Dorsolateral prefrontal cortex (tissue), 120 donors: ENCODE measurements at regions of chr1 and their contacts with region 1.

Region 1: DNA sequence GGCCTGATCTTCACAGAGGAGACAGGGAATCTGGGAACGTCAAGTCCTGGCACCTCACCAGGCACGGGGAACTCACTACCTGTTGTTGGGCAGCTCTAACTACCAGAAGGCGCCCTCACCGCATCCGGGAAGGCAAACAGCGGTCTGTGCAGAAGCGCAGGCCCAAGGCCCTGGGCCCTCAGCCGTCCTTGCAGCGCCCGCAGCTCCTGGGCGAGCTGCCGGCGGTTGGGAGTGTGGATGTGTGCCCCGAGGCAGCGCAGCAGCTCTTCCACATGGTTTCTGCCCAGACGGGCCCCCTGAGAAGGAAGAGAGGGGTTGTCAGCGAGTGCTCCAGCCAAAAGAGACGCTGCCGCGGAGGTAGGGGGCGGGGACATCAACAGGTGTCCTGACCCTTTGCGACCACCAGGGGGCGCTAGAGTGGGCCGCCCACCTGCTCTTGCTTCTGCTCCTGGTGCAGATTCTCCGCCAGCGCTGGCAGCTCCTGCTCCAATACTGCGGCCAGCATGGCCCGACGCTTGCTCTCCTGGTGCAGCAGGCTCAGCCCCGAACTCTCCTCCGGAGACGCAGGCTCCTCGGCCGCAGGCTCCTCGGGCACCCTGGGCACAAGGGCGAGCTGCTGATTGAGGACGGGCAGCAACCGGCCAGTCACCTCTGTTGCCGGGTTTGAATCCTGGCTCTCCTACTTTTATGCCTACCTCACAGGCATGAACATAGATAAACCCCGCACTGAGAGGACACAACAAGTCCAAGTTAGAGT is 9.3 kb downstream of the MAP3K6 start:
- DNase-seq: peak; percentile 50 to 84 (median 60)
- H3K4me3 ChIP-seq: peak overlapping the region in 36 of 59 donors; percentile 6 to 54 (median 37)
- H3K27ac ChIP-seq: peak overlapping the region in 1 of 59 donors; percentile 6
- H3K27me3 ChIP-seq: no peaks in the 10 kb centered on the region
- CTCF ChIP-seq: peak; percentile 63 to 99 (median 95)

Region 2: GRCh38 chr1:25442178-25442577 is 1915.3 kb before region 1 on chr1:
- intact Hi-C with region 1: loop called in 1 of 2 experiments (anchors 10 kb)
- DNase-seq: no peak
- H3K4me3 ChIP-seq: no peak overlapping the region
- H3K27ac ChIP-seq: no peak overlapping the region
- H3K27me3 ChIP-seq: no peaks in the 10 kb centered on the region
- CTCF ChIP-seq: no peak

Region 3: GRCh38 chr1:26970810-26971209 is 386.6 kb before region 1 on chr1:
- intact Hi-C with region 1: no loop called
- DNase-seq: no peak
- H3K4me3 ChIP-seq: no peak overlapping the region
- H3K27ac ChIP-seq: no peak overlapping the region
- H3K27me3 ChIP-seq: peaks cover 0 to 7% (median 0%) of the 10 kb centered on the region in 45 donors
- CTCF ChIP-seq: no peak